ENCODE measurements at regions of chr13 and their contacts with region 1.

Region 1: GRCh38 chr13:111066544-111066943 is 48.6 kb upstream of the ARHGEF7 start:
- DNase-seq: no peak
- H3K4me3 ChIP-seq: no peak overlapping the region
- H3K27me3 ChIP-seq: peaks cover 5% of the 10 kb centered on the region
- CTCF ChIP-seq: no peak

Region 2: GRCh38 chr13:111115965-111116500 is 49.5 kb after region 1 on chr13:
- CTCF ChIA-PET with region 1: interaction called, 10 read pairs
- POLR2A ChIA-PET with region 1: no interaction called
- DNase-seq: peak; percentile 86
- H3K4me3 ChIP-seq: peak overlapping the region; percentile 51
- H3K27me3 ChIP-seq: peaks cover 23% of the 10 kb centered on the region
- CTCF ChIP-seq: no peak

Region 3: GRCh38 chr13:111131611-111132010 is 65.1 kb after region 1 on chr13:
- CTCF ChIA-PET with region 1: no interaction called
- POLR2A ChIA-PET with region 1: no interaction called
- DNase-seq: no peak
- H3K4me3 ChIP-seq: no peak overlapping the region
- H3K27me3 ChIP-seq: peaks cover 4% of the 10 kb centered on the region; the same call in 1 of the 2 replicates
- CTCF ChIP-seq: no peak

Region 4: DNA sequence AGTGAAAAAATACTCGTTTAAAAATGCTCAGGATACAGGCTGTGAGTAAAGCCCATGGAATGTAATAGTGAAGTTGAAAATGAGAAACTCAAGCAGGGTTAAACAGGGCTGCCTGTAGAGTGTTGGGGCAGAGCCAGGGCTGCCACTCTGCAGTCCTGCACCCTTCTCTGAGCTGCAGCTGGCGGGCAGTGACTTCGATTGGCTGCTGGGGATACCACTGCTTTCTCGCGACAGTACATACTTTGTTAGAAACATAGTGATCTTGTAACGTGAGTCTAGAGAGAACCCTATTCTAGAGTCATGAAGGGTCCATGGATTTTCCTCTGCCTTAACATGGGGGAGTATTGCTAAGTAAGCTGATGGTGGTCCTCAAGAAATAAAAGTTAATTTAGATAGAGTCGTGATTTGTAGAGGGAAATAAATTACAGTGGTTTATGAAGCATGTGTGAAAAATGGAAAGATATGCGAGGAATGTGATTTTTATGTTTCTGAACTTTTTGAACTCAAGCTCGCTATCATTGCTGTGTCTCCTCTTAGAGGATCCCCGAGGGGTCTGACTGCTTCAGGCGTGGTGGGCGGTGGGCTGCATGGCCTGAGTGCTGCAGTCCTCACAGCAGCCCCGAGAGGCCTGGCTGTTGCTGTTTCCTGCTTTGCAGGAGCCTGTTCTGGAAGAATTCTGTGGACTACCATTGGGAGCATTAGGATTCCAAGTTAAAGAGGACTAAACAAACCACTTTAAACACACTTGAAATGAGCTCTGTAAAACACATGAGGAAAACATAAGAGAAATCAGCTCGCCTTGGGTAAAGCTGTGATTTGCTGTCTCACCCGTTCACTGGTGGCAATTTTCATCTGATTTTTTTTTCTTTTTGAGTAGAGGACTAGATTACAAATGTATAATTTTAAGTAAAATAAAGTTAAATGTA is 144.3 kb after region 1 on chr13:
- CTCF ChIA-PET with region 1: interaction called, 33 read pairs
- POLR2A ChIA-PET with region 1: no interaction called
- DNase-seq: peak; percentile 43
- H3K4me3 ChIP-seq: 0 out of 2 replicates have a peak overlapping the region, but pooled peaks have one; percentile 9
- H3K27me3 ChIP-seq: no peaks in the 10 kb centered on the region
- CTCF ChIP-seq: no peak

Region 5: DNA sequence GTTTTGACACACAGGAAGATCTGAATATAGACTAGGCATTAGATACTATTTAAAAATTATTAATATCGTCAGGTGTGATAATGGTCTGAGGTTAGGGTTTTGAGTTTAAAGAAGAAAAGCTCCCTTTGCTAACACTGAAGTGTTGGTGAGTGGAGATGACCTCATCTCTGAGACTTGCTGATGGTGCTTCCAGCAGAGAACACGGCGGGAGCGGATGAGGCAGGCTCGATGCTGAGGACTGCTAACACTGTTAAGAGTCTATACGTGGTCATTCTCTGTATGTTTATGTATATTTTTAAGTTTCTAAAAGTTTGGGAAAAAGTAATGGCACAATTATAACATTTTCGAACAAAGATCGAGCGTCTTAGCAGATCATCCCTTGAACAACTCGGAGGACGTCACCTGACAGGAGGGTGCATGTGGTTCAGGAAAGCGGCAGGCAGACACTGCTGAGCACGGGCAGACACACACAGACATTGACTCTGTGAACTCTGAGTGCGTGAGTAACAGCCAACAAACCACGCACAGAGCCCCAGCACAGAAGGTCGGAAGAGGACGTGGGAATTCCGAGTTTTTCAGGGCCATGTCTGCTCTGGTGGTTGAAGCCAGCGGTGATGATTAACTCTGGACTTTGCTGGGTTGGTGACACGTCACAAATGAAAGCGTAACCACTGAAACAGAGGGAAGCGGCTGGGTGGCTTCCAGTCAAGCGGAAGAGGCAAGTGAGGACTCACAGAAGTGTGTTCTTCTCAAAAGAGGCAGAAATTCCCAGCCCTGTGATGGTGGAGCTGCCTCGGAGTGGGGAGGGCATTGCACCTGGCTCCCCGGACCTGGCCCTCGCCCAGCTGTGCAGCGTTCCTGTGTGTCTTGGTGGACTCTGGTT is 162.0 kb after region 1 on chr13:
- CTCF ChIA-PET with region 1: interaction called, 29 read pairs
- POLR2A ChIA-PET with region 1: no interaction called
- DNase-seq: no peak
- H3K4me3 ChIP-seq: no peak overlapping the region
- H3K27me3 ChIP-seq: no peaks in the 10 kb centered on the region
- CTCF ChIP-seq: no peak

Region 6: GRCh38 chr13:111429064-111429558 is 362.6 kb after region 1 on chr13:
- CTCF ChIA-PET with region 1: interaction called, 13 read pairs
- POLR2A ChIA-PET with region 1: no interaction called
- DNase-seq: no peak
- H3K4me3 ChIP-seq: no peak overlapping the region
- H3K27me3 ChIP-seq: no peaks in the 10 kb centered on the region
- CTCF ChIP-seq: peak; percentile 58